ENCODE measurements at regions of chr3 and their contacts with region 1.

Region 1: DNA sequence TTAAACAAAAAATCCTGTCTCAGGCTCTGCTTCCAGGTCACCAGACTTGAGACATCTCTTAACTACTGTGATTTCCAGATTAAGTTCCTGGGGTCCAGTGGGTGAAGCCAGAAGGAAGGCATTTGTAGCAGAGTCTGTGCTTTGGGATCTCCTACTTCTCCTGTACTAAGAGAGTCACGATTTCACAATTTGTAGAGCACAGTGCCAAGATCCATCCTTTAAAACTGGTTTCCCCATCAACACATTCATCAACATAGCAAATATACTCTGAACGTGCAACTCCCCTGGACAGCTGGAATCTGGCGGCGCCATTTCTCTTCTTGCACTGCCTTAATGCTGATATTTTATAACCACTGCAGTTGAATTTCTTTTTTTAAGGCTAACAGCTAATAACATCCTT is 33.2 kb downstream of the CDCP1 start:
- DNase-seq: no peak
- ATAC-seq: no peak
- H3K4me3 ChIP-seq: no peak overlapping the region
- H3K27ac ChIP-seq: no peak overlapping the region
- H3K4me1 ChIP-seq: no peaks in the 10 kb centered on the region
- H3K27me3 ChIP-seq: no peaks in the 10 kb centered on the region
- CTCF ChIP-seq: no peak

Region 2: GRCh38 chr3:45127130-45127822 is 14.3 kb after region 1 on chr3:
- CTCF ChIA-PET with region 1: no interaction called
- POLR2A ChIA-PET with region 1: interaction called, 18 read pairs
- in situ Hi-C with region 1: no loop called
- intact Hi-C with region 1: no loop called
- DNase-seq: no peak
- ATAC-seq: no peak
- H3K4me3 ChIP-seq: no peak overlapping the region
- H3K27ac ChIP-seq: no peak overlapping the region
- H3K4me1 ChIP-seq: peaks cover 15% of the 10 kb centered on the region
- H3K27me3 ChIP-seq: no peaks in the 10 kb centered on the region
- CTCF ChIP-seq: no peak